HepG2 (cell line): ENCODE measurements at regions of chr5 and their contacts with region 1.

Region 1: DNA sequence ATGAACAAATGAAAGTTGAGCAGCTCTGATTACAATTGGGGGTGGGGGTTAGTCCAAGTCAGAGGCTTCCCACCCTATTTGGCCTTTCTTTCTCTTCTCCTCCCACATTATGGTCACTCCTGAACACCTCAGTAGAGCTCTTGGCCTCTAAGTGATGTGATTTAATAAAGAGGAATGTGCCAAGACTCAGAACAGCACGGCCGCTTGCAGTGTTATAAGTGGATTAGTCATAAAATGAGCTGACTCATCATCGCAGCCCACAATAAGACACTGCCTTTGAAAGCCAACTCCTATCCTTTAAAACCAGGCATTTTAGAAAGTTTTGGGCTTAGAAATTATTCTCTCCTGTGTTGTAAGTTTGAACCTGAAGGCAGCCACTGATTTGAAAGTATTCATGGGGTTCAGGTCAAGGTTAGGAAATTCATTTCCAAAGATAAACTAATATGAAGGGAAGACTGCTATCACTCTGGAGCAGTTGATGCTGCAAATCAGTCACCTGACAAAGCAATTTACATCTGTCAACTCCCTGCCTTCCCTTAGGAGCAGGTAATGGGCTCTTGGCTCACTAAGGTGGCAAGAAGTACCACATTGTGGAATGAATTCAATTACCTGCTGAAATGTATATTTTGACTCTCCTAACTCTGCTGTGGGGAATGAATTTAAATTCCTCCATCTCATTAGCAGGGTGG is 283.6 kb upstream of the NMUR2 start:
- DNase-seq: no peak
- ATAC-seq: no peak
- H3K4me3 ChIP-seq: no peak overlapping the region
- H3K27ac ChIP-seq: no peak overlapping the region
- H3K4me1 ChIP-seq: no peaks in the 10 kb centered on the region
- H3K27me3 ChIP-seq: no peaks in the 10 kb centered on the region
- CTCF ChIP-seq: no peak
- EP300 ChIP-seq: no peak
- POLR2A ChIP-seq: no peak
- RAD21 ChIP-seq: no peak

Region 2: GRCh38 chr5:152072091-152072490 is 616.6 kb before region 1 on chr5:
- CTCF ChIA-PET with region 1: no interaction called
- POLR2A ChIA-PET with region 1: no interaction called
- in situ Hi-C with region 1: no loop called
- intact Hi-C with region 1: no loop called
- DNase-seq: no peak
- ATAC-seq: no peak
- H3K4me3 ChIP-seq: no peak overlapping the region
- H3K27ac ChIP-seq: no peak overlapping the region
- H3K4me1 ChIP-seq: no peaks in the 10 kb centered on the region
- H3K27me3 ChIP-seq: no peaks in the 10 kb centered on the region
- CTCF ChIP-seq: no peak
- EP300 ChIP-seq: no peak
- POLR2A ChIP-seq: no peak
- RAD21 ChIP-seq: no peak

Region 3: GRCh38 chr5:152622628-152623027 is 66.1 kb before region 1 on chr5:
- CTCF ChIA-PET with region 1: no interaction called
- POLR2A ChIA-PET with region 1: no interaction called
- in situ Hi-C with region 1: no loop called
- intact Hi-C with region 1: no loop called
- DNase-seq: no peak
- ATAC-seq: no peak
- H3K4me3 ChIP-seq: no peak overlapping the region
- H3K27ac ChIP-seq: no peak overlapping the region
- H3K4me1 ChIP-seq: no peaks in the 10 kb centered on the region
- H3K27me3 ChIP-seq: no peaks in the 10 kb centered on the region
- CTCF ChIP-seq: no peak
- EP300 ChIP-seq: no peak
- POLR2A ChIP-seq: no peak
- RAD21 ChIP-seq: no peak

Region 4: DNA sequence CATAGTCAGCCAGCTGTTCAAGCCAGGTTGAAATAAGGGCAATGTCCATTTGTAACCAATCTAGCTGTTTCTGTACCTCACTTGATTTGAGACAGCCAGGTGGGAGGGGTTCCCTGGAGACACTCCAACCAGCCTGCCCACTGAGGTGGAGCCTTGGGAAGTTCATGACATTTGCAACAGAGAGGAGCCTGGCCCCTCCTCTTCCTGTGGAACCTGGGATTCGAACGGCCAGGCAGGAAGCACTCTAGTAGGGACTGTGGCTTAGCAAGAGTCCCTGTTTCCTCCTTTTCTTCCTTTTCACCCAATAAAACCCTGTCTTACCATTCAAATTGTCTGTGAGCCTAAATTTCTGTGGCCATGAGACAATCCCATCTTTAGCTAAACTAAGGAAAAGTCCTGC is 28.7 kb after region 1 on chr5:
- CTCF ChIA-PET with region 1: no interaction called
- POLR2A ChIA-PET with region 1: no interaction called
- in situ Hi-C with region 1: no loop called
- intact Hi-C with region 1: loop called (anchors 1 kb)
- DNase-seq: no peak
- ATAC-seq: no peak
- H3K4me3 ChIP-seq: no peak overlapping the region
- H3K27ac ChIP-seq: no peak overlapping the region
- H3K4me1 ChIP-seq: no peaks in the 10 kb centered on the region
- H3K27me3 ChIP-seq: no peaks in the 10 kb centered on the region
- CTCF ChIP-seq: no peak
- EP300 ChIP-seq: no peak
- POLR2A ChIP-seq: no peak
- RAD21 ChIP-seq: no peak

Region 5: GRCh38 chr5:152844713-152845112 is 156.0 kb after region 1 on chr5:
- CTCF ChIA-PET with region 1: no interaction called
- POLR2A ChIA-PET with region 1: no interaction called
- in situ Hi-C with region 1: no loop called
- intact Hi-C with region 1: no loop called
- DNase-seq: no peak
- ATAC-seq: no peak
- H3K4me3 ChIP-seq: no peak overlapping the region
- H3K27ac ChIP-seq: no peak overlapping the region
- H3K4me1 ChIP-seq: no peaks in the 10 kb centered on the region
- H3K27me3 ChIP-seq: no peaks in the 10 kb centered on the region
- CTCF ChIP-seq: no peak
- EP300 ChIP-seq: no peak
- POLR2A ChIP-seq: no peak
- RAD21 ChIP-seq: no peak